Activated CD4-positive, alpha-beta memory T cell treated with anti-CD3 and anti-CD28 coated beads for 36 hours (primary cell): ENCODE measurements at regions of chr17 and their contacts with region 1.

Region 1: DNA sequence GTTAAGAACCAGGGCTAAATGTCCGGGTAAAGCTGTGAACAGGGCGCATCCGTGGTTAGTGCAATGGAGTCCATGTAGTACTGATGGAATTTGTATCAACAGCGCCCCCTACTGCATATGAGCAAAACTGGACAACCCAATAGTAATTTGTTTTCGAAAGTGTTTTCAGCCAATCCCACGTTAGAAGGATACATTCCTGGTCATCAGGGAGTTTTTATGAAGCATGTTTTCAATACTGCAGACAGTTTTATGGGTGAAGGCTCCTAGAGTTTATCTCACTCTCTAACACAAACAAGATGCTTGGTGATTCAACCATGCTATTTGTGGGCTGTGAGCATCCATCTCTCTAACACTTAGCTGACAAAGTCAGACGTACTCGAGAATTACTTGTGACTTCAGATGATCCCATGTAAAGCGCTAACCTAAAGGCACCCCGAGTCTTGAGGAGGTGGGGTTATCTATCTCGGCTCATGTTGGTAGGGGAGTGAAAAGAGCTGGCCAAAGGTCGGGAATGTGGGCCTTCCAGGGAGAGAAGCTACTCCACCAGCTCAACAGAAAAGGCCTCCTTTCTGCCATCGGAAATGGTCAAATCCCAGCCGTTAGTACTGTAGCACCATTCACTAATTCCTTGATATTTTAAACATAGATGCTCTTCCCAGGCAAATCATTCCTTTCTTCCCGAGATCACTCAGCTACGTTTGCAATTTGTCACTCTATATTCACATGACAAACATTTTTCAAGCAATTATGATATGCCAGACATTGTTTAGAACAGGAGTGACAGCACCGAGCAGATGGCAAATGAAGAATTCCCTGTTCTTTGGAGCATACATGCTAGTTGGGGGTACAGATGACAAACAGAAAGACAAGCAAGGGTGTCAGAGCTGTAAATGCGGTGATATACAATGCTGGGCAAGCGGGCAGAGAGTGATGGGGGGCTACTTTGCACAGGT is 46.9 kb upstream of the HNF1B start:
- DNase-seq: peak; percentile 66
- H3K4me3 Mint-ChIP-seq: no peak overlapping the region
- H3K27ac Mint-ChIP-seq: no peak overlapping the region
- H3K4me1 Mint-ChIP-seq: no peaks in the 10 kb centered on the region
- H3K27me3 Mint-ChIP-seq: peaks cover 19% of the 10 kb centered on the region

Region 2: DNA sequence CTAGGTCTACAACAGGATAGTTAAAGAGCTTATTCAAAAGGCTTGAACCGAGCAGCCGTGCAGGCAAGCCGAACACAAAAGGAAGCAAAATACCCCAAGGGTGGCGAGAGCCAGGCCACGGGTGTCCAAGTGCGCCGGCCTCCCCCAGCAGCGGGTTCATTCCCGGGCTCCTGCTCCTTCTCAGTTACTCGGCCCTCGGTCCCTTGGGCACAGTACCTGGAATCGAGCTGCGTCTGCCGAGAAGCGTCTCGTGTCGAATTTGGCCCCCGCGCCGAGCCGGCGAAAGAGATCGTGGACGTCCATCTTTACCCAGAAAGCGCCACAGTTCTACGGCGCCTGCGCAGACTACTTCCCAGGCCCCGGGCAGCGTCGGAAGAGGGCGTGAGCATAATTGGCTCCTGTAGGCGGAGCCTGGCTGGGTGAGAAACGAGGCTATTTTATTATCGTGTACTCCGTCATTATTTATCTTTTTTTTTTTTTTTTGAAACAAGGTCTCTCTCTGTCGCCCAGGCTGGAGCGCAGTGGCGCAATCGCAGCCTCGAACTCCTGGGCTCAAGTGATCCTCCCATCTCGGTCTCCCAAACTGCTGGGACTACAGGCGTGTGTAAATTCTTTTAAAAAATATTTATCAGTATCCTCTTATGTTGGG is 148.5 kb before region 1 on chr17 and contains the start of gene DDX52:
- CTCF ChIA-PET with region 1: interaction called, 5 read pairs
- POLR2A ChIA-PET with region 1: no interaction called
- intact Hi-C with region 1: loop called (anchors 5 kb)
- DNase-seq: peak; percentile 93
- H3K4me3 Mint-ChIP-seq: peak within 1 kb of the TSS; percentile 92
- H3K27ac Mint-ChIP-seq: peak within 1 kb of the TSS; percentile 78
- H3K4me1 Mint-ChIP-seq: peaks cover 23% of the 10 kb centered on the region
- H3K27me3 Mint-ChIP-seq: peaks cover 18% of the 10 kb centered on the region
- total RNA-seq, gene DDX52: 24.9 to 26.2 TPM

Region 3: GRCh38 chr17:37701496-37701898 is 90.2 kb before region 1 on chr17:
- CTCF ChIA-PET with region 1: interaction called, 50 read pairs
- POLR2A ChIA-PET with region 1: no interaction called
- intact Hi-C with region 1: loop called (anchors 1 kb)
- DNase-seq: peak; percentile 68
- H3K4me3 Mint-ChIP-seq: no peak overlapping the region
- H3K27ac Mint-ChIP-seq: no peak overlapping the region
- H3K4me1 Mint-ChIP-seq: peaks cover 13% of the 10 kb centered on the region
- H3K27me3 Mint-ChIP-seq: peaks cover 26% of the 10 kb centered on the region

Region 4: DNA sequence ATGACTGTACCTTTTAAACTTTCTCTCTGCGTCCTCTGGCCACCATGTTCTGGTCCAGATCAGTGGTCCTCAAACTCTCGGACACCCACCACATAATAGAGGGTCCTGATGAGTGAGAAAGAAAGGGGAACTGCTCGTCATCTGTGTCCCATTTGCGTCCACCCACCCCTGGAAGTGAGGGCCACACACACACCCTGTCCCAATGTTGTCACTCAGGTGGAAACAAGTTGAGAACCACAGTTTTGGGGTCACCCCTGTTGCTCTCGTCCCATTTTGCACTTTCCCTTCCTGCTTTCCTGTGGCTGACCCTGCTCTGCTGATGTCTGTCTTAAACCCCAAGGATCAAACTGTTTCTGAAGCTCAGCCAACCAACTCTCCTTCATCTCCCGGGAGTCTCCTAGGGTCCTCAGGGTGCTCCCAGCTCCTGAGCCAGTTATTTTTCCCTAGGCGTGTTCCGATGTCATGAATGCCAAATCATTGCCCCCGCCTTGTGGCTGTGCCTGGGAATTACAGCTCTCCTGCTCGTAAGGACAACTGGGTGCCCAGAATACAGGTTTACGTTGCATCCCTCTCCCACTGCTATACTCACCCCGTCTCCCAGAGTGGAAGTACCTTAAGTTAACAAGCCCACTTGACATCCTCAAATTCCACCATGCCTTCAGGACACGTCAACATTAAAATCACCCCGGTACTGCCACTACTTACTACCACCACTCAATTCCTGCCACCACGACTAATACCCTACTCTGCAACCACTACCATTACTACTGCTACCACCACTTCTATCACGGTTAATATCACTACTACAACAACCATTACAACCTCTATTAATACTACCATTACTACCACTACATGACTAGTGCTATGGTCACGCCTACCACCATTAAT is 20.8 kb before region 1 on chr17:
- CTCF ChIA-PET with region 1: interaction called, 15 read pairs
- POLR2A ChIA-PET with region 1: no interaction called
- intact Hi-C with region 1: no loop called
- DNase-seq: peak; percentile 62
- H3K4me3 Mint-ChIP-seq: no peak overlapping the region
- H3K27ac Mint-ChIP-seq: no peak overlapping the region
- H3K4me1 Mint-ChIP-seq: peaks cover 27% of the 10 kb centered on the region
- H3K27me3 Mint-ChIP-seq: peaks cover 12% of the 10 kb centered on the region

Region 5: DNA sequence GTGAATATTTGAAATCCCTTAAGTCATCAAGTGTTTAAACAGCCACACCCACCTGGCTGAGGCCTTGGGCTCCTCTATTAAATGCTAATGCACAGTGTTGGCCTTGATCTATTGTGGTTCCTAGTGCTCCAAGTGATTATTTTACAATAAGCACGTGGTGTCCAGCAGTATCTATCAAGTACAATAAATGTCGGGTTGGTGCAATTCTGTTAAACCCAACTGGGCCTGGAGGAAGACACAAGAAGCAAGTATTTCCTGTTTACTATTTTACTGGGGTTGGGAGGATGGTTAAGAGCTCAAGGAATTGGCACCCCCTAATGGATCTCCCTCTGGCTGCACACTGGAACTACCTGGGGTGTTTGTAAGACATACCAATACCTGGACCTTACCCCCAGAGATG is 25.2 kb after region 1 on chr17:
- CTCF ChIA-PET with region 1: interaction called, 10 read pairs
- POLR2A ChIA-PET with region 1: no interaction called
- intact Hi-C with region 1: no loop called
- DNase-seq: no peak
- H3K4me3 Mint-ChIP-seq: no peak overlapping the region
- H3K27ac Mint-ChIP-seq: no peak overlapping the region
- H3K4me1 Mint-ChIP-seq: no peaks in the 10 kb centered on the region
- H3K27me3 Mint-ChIP-seq: peaks cover 21% of the 10 kb centered on the region